ENCODE measurements at regions of chr12 and their contacts with region 1.

Region 1: DNA sequence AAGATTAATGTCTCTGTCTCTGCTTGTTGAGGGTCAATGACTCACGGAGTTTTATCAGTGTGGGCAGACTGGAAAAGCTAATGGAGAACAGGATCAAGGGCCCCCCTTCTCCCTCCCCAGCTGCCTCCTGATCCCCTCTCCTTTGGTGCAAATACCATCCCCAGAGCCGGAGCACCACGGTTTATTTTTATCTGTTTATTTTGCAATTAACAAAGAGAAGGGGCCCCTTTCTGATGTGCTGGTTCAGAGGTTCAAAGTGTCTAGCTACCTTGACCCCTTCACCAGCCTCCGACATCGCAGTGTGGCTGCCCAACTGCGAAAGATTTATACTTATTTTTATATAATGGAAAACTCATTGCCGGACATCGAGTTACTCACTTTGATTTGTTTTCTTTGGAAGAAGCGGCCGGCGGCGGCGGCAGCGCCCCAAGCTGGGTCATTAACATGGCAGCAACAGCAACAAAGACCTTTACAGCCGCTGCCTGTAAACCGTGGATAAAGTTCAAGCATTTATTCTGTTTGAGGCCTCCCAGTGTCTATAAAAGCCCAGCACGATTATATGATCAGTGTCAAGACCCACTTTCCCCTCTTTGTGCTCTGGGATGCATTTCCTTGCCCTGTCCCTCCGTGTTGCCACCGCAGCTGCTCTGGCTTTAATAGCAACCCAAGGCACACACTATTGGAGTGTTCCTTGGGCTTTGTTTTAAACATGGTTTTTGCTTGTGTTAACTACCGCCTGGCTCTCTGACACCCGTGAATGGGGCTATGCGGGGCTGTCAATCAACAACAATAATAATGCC is 47.4 kb upstream of the PARP11 start:
- DNase-seq: no peak
- H3K4me3 ChIP-seq: no peak overlapping the region
- H3K27ac ChIP-seq: no peak overlapping the region
- H3K4me1 ChIP-seq: no peaks in the 10 kb centered on the region
- H3K27me3 ChIP-seq: peaks cover 0 to 5% of the 10 kb centered on the region in 2 donors
- CTCF ChIP-seq: no peak
- POLR2A ChIP-seq: no peak

Region 2: DNA sequence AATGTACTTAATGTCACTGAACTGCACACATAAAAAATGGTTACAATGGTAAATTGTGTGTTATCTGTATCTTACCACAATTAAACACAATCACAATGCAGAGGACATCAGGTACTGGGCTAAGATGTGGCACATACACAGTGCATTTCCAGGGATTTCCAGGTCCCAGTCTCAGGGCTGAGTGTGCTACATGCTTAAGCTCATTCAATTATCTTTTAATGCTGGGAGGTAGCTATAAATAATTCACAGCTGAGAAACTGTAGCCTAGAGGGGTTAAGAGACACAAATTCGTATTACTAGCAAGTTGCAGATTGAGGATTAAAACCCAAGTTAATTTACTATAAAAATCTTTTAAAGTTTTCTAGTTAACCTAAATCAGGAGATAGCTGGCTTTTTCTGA is 234.7 kb before region 1 on chr12:
- intact Hi-C with region 1: no loop called
- DNase-seq: no peak
- H3K4me3 ChIP-seq: no peak overlapping the region
- H3K27ac ChIP-seq: no peak overlapping the region
- H3K4me1 ChIP-seq: no peaks in the 10 kb centered on the region
- H3K27me3 ChIP-seq: no peaks in the 10 kb centered on the region
- CTCF ChIP-seq: no peak
- POLR2A ChIP-seq: no peak

Region 3: DNA sequence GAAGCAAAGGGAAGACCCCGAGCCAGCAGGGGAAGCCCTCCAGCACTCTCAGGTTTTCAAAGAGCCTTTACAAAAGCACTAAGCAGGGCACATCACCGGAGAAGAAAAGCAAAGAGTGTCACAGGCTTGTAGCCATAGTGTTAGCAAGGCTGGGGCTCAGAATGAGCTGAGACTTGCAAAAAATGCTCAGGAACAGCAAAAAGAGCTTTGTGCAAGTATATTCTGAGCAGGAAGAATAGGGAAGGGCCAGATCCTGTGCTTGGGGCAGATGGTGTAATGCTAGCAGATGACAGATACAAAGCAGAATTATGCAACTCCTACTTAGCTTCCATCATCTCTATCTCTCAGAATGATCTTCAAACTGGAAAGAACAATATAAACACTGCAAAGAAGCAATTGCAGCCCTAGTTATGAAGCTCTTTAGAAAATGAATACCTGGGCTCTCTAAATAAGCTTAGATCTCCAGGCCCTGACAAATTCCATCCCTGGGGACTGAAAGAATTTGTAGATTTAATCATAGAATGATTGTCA is 23.7 kb before region 1 on chr12:
- intact Hi-C with region 1: no loop called
- DNase-seq: peak in 1 of 2 donors; percentile 19
- H3K4me3 ChIP-seq: no peak overlapping the region
- H3K27ac ChIP-seq: peak overlapping the region; percentile 3 to 22
- H3K4me1 ChIP-seq: no peaks in the 10 kb centered on the region
- H3K27me3 ChIP-seq: no peaks in the 10 kb centered on the region
- CTCF ChIP-seq: no peak
- POLR2A ChIP-seq: no peak

Region 4: GRCh38 chr12:3931746-3932145 is 11.2 kb after region 1 on chr12:
- intact Hi-C with region 1: loop called (anchors 2 kb)
- DNase-seq: peak in 1 of 2 donors; percentile 23
- H3K4me3 ChIP-seq: no peak overlapping the region
- H3K27ac ChIP-seq: no peak overlapping the region
- H3K4me1 ChIP-seq: no peaks in the 10 kb centered on the region
- H3K27me3 ChIP-seq: peaks cover 0 to 8% of the 10 kb centered on the region in 2 donors
- CTCF ChIP-seq: no peak
- POLR2A ChIP-seq: no peak

Region 5: GRCh38 chr12:3988519-3989448 is 68.2 kb after region 1 on chr12:
- intact Hi-C with region 1: no loop called
- DNase-seq: no peak
- H3K4me3 ChIP-seq: no peak overlapping the region
- H3K27ac ChIP-seq: no peak overlapping the region
- H3K4me1 ChIP-seq: no peaks in the 10 kb centered on the region
- H3K27me3 ChIP-seq: peaks cover 0 to 5% of the 10 kb centered on the region in 2 donors
- CTCF ChIP-seq: no peak
- POLR2A ChIP-seq: no peak

Region 6: DNA sequence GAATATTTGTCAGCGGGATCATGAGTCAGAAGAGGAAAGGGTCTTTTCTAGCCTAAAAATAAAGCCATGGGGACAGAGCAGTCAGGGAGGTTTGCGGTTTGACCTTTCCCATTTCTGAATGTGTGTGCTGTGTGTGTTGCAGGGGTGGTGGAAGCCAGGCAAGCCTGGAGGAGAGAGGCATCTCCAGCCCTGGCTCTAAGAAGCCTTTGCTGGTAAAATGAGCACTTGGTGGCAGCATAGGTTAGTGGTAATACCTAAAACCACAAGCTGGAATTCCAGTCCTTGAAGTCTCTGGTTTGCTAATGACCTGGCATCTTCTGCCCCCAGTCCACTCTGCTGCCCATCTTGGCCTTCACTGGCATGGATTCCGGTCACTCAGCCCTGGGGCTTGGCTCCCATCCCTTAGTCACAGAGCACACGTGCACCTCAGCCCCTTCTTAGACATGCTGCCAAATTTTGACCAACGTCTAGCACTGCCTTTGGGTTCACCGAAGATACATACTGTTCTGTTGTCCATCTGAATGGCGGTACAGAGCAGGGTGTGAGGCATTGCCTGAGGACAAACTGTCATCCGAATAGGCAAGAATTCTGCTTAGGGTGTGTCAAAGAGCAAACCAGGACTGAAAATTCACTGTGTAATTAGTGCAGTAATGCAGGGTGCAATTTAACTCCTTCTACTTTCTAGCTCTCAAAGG is 1175.8 kb after region 1 on chr12:
- intact Hi-C with region 1: no loop called
- DNase-seq: no peak
- H3K4me3 ChIP-seq: no peak overlapping the region
- H3K27ac ChIP-seq: no peak overlapping the region
- H3K4me1 ChIP-seq: no peaks in the 10 kb centered on the region
- H3K27me3 ChIP-seq: peaks cover 0 to 15% of the 10 kb centered on the region in 2 donors
- CTCF ChIP-seq: no peak
- POLR2A ChIP-seq: no peak

Measured in breast epithelium (tissue), 4 donors.